ENCODE measurements at regions of chr10 and their contacts with region 1.

Region 1: GRCh38 chr10:21989453-21990154 is 13.9 kb downstream of the DNAJC1 start:
- DNase-seq: peak; percentile 74 to 75
- H3K4me3 ChIP-seq: no peak overlapping the region
- H3K4me3 Mint-ChIP-seq: no peak overlapping the region
- H3K27ac Mint-ChIP-seq: no peak overlapping the region
- H3K4me1 ChIP-seq: peaks cover 3% of the 10 kb centered on the region; the same call in 1 of the 2 replicates
- H3K4me1 Mint-ChIP-seq: peaks cover 7% of the 10 kb centered on the region
- H3K27me3 ChIP-seq: no peaks in the 10 kb centered on the region
- H3K27me3 Mint-ChIP-seq: no peaks in the 10 kb centered on the region
- CTCF ChIP-seq: peak; percentile 73 to 92

Region 2: DNA sequence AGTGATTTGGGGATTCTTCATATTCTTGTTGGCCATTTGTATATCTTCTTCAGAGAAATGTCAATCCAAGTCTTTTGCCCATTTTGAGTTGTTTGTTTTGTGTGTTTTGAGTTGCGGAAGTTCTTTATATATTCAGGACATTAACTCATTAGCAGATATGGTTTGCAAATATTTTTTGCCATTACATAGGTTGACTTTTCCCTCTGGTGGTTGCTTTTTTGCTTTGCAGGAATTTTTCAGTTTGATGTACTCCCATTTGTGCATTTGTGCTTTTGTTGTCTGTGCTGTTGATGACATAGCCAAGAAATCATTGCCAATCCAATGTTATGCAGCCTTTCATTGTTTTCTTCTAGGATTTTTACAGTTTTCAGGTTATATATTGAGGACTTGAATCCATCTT is 77.5 kb after region 1 on chr10:
- CTCF ChIA-PET with region 1: no interaction called
- POLR2A ChIA-PET with region 1: no interaction called
- intact Hi-C with region 1: loop called (anchors 1 kb)
- DNase-seq: no peak
- H3K4me3 ChIP-seq: no peak overlapping the region
- H3K4me3 Mint-ChIP-seq: no peak overlapping the region
- H3K27ac Mint-ChIP-seq: no peak overlapping the region
- H3K4me1 ChIP-seq: no peaks in the 10 kb centered on the region
- H3K4me1 Mint-ChIP-seq: no peaks in the 10 kb centered on the region
- H3K27me3 ChIP-seq: no peaks in the 10 kb centered on the region
- H3K27me3 Mint-ChIP-seq: peaks cover 14% of the 10 kb centered on the region
- CTCF ChIP-seq: no peak

Region 3: GRCh38 chr10:22218451-22218850 is 228.8 kb after region 1 on chr10:
- CTCF ChIA-PET with region 1: no interaction called
- POLR2A ChIA-PET with region 1: no interaction called
- intact Hi-C with region 1: loop called (anchors 1 kb)
- DNase-seq: peak in 1 of 2 experiments; percentile 26
- H3K4me3 ChIP-seq: no peak overlapping the region
- H3K4me3 Mint-ChIP-seq: no peak overlapping the region
- H3K27ac Mint-ChIP-seq: no peak overlapping the region
- H3K4me1 ChIP-seq: no peaks in the 10 kb centered on the region
- H3K4me1 Mint-ChIP-seq: no peaks in the 10 kb centered on the region
- H3K27me3 ChIP-seq: no peaks in the 10 kb centered on the region
- H3K27me3 Mint-ChIP-seq: peaks cover 13% of the 10 kb centered on the region
- CTCF ChIP-seq: peak; percentile 27 to 41

Region 4: DNA sequence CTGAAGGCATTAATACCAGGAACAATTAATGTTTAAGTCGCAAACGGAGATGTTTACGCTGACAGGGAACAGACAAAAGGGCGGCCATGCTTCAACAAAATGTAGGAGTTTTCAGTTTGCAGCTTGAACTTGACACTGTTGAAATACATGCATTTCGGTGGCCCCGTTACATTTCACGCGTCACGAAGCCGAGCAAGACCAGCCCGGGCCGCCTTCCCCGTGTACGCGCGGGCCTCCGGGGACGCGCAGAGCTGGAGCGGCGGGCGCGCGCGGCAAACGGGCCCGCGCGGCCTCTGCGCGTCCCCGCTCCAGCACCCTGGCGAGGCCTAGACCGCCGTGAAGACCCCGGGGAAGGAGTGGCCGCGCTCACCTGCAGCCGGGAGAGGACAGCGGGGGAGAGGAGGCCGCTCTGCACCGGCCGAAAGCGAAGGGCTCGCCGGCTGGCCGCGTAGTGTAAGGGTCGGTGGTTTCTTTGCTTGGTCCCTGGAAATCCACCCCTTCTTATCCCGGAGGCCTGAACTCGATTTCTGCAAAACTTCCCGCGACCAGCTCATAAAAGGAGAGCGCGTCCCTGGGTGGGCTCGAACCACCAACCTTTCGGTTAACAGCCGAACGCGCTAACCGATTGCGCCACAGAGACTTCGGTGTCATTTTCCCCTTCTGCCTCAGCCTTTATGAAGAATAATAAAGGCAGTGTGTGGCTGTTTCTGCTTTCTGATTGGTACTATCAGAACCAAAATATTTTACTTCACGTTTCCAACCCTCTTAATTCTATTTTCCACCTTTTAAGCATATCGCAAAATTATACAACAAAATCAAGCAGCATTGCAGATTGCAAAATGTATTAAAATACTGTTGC is 239.6 kb after region 1 on chr10:
- CTCF ChIA-PET with region 1: no interaction called
- POLR2A ChIA-PET with region 1: no interaction called
- intact Hi-C with region 1: no loop called
- DNase-seq: peak; percentile 88 to 93
- H3K4me3 ChIP-seq: peak overlapping the region; percentile 89
- H3K4me3 Mint-ChIP-seq: peak overlapping the region; percentile 80
- H3K27ac Mint-ChIP-seq: peak overlapping the region; percentile 98
- H3K4me1 ChIP-seq: peaks cover 9% of the 10 kb centered on the region; the same call in 1 of the 2 replicates
- H3K4me1 Mint-ChIP-seq: no peaks in the 10 kb centered on the region
- H3K27me3 ChIP-seq: no peaks in the 10 kb centered on the region
- H3K27me3 Mint-ChIP-seq: peaks cover 8% of the 10 kb centered on the region
- CTCF ChIP-seq: no peak

Region 5: GRCh38 chr10:22580711-22581110 is 591.1 kb after region 1 on chr10:
- CTCF ChIA-PET with region 1: no interaction called
- POLR2A ChIA-PET with region 1: no interaction called
- intact Hi-C with region 1: loop called (anchors 10 kb)
- DNase-seq: no peak
- H3K4me3 ChIP-seq: no peak overlapping the region
- H3K4me3 Mint-ChIP-seq: no peak overlapping the region
- H3K27ac Mint-ChIP-seq: no peak overlapping the region
- H3K4me1 ChIP-seq: peaks cover 5% of the 10 kb centered on the region; the same call in 1 of the 2 replicates
- H3K4me1 Mint-ChIP-seq: no peaks in the 10 kb centered on the region
- H3K27me3 ChIP-seq: no peaks in the 10 kb centered on the region
- H3K27me3 Mint-ChIP-seq: no peaks in the 10 kb centered on the region
- CTCF ChIP-seq: no peak

Region 6: DNA sequence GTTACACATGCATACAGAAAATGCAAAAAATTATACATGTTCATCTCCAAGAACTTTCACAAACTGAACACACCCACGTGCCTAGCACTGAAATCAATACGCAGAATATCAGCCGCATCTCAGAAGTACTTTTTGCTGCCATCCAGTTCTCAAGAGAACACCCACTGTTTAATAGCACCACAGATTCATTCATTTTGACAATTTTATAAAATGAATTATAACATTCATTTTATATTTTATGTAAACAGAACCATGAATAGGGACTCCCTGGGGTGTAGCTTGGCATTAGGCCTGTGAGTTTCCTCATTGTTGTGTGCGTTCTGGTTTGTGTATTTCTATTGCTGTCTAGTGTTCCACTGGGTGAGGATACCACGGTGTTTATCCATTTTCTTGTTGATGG is 802.1 kb after region 1 on chr10:
- CTCF ChIA-PET with region 1: no interaction called
- POLR2A ChIA-PET with region 1: no interaction called
- intact Hi-C with region 1: no loop called
- DNase-seq: no peak
- H3K4me3 ChIP-seq: no peak overlapping the region
- H3K4me3 Mint-ChIP-seq: no peak overlapping the region
- H3K27ac Mint-ChIP-seq: no peak overlapping the region
- H3K4me1 ChIP-seq: no peaks in the 10 kb centered on the region
- H3K4me1 Mint-ChIP-seq: no peaks in the 10 kb centered on the region
- H3K27me3 ChIP-seq: no peaks in the 10 kb centered on the region
- H3K27me3 Mint-ChIP-seq: no peaks in the 10 kb centered on the region
- CTCF ChIP-seq: no peak

Region 7: GRCh38 chr10:23067939-23068775 is 1078.6 kb after region 1 on chr10:
- CTCF ChIA-PET with region 1: no interaction called
- POLR2A ChIA-PET with region 1: no interaction called
- intact Hi-C with region 1: loop called (anchors 1 kb)
- DNase-seq: peak; percentile 75 to 80
- H3K4me3 ChIP-seq: no peak overlapping the region
- H3K4me3 Mint-ChIP-seq: no peak overlapping the region
- H3K27ac Mint-ChIP-seq: no peak overlapping the region
- H3K4me1 ChIP-seq: no peaks in the 10 kb centered on the region
- H3K4me1 Mint-ChIP-seq: no peaks in the 10 kb centered on the region
- H3K27me3 ChIP-seq: no peaks in the 10 kb centered on the region
- H3K27me3 Mint-ChIP-seq: no peaks in the 10 kb centered on the region
- CTCF ChIP-seq: peak; percentile 91 to 94